Right ventricle myocardium inferior (tissue), 1 donor: ENCODE measurements at regions of chr9 and their contacts with region 1.

Region 1: DNA sequence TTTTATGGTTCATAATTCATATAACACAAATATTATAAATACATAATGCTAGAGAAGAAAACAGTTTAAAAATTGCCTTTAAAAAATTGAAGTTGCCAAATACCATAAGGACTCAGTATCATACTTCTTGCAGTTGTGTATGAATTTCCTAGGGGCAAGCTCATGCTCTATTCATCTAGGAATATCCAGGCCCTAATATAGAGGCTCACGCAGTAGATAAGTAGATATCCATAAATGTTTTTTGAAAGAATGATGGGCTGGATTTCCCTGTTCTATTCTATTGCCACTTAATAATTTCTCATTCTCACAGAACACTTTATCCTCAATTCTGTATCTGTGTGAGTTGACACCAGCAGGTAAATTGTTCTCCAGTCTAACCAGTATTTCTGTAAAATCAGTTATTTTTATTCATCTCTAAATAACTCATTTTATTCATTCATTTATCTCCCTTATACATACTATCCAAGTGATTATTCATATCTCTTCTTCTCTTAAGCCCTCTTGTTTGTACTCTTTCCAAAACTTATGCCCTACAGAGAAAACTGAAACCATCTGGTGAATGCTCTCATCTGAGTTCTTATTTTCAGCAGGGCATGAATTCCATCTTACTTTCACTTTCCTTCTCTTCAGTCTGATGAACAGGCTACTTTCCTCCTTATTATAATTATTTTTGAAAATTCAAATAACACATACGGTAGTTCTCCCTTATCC is 97.1 kb downstream of the SLC44A1 start:
- DNase-seq: no peak
- ATAC-seq: no peak

Region 2: DNA sequence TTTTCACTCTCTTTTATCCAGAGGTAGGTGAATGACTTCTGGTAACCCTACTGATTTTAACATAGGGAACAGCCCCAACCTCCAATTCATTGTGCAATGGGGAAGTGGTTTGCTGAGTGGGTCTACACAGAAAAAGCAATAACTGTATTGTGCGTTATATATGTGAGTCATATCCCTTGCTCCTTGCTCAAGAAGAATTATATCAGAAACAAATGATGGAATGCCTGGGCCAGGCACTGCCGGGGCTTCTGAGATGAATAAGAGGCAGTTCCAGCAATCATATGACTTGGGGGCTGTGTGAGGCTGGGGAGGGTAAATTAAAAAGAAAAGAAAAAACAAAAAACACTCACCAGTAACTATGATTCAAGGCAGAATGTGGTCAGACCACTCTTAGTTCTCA is 334.4 kb before region 1 on chr9:
- intact Hi-C with region 1: no loop called
- DNase-seq: no peak
- ATAC-seq: peak; percentile 60

Region 3: GRCh38 chr9:105318729-105319191 is 22.8 kb before region 1 on chr9:
- intact Hi-C with region 1: loop called (anchors 1 kb)
- DNase-seq: no peak
- ATAC-seq: no peak